ENCODE measurements at regions of chr14 and their contacts with region 1.

Region 1: DNA sequence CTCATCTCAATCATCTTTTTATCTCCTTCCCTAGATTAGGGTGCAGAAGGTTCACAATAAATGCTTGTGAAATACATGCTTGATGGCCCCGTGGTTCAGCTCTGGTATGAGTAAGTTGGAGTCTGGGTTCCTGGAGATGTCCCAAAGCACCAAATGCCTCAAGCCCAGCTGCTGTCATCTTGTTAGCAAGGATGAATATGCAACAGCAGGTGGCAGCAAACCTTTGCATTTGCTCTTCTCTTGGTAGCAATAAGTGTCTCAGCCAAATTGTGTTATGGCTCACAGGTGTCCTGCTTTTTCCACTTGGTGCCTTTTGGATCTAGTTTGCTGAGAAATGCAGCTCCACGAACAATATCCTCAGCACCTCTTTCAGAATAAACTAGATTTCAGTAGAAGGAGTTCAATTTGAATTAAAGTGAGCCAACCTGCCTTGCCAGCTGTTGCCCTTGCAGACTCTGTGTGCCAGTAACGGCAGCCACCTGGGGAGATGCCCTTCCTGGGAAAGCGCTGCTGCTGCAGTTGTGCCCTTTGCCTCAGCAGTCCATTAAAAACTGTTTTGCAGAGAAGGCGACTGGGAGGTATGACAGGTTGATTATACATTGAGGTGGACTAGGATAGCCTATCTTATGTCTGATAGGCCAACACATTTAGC is 417.3 kb downstream of the SNAPC1 start:
- DNase-seq: peak in 5 of 6 donors; percentile 26 to 71 (median 38)
- ATAC-seq: peak; percentile 64 to 89 (median 85)
- H3K4me3 ChIP-seq: no peak overlapping the region
- H3K27ac ChIP-seq: no peak overlapping the region
- H3K4me1 ChIP-seq: no peaks in the 10 kb centered on the region
- H3K27me3 ChIP-seq: no peaks in the 10 kb centered on the region
- CTCF ChIP-seq: peak in 3 of 4 donors; percentile 25 to 42 (median 40)

Region 2: DNA sequence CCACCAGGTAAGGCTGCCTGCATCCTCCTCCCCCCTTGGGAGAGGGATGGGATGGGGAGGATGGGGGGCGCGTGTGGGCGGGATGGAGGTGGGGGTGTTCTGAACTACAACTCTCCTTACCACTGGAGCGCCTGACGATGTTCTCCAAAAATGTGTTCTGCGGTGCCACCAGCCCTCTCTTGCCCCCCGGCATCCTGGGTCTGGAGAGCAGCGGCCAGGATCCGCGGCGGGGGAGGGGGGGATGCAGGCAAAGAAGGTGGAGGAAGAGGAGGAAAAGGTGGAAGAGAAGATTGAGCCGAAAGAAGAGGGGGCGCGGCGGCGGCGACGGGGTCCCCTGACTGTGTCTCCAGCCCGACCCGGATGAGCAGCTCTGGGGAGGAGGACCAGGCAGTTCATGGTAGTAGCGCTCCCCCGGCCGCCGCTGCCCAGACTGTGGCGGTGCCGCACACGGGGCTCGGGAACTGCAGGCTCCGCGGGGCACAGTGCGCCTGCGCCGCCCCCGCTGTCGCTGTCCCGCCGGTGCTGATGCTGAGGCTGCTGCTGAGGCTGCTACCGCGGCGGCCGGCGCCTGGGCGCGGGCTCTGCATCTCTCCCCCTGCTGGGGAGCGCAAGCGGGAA is 865.6 kb after region 1 on chr14 and contains the start of gene KCNH5:
- intact Hi-C with region 1: loop called in 1 of 3 experiments (anchors 10 kb)
- DNase-seq: peak in 4 of 6 donors; percentile 11 to 69 (median 41)
- ATAC-seq: peak; percentile 56 to 90 (median 86)
- H3K4me3 ChIP-seq: peak within 1 kb of the TSS in 2 of 4 donors; percentile 29 to 39
- H3K27ac ChIP-seq: no peak within 1 kb of the TSS
- H3K4me1 ChIP-seq: peaks cover 0 to 7% (median 0%) of the 10 kb centered on the region in 3 donors
- H3K27me3 ChIP-seq: peaks cover 0 to 38% (median 1%) of the 10 kb centered on the region in 4 donors
- CTCF ChIP-seq: no peak
- total RNA-seq, gene KCNH5: not detected

Measured in pancreas (tissue), 10 donors.